CD4-positive, alpha-beta memory T cell (primary cell): ENCODE measurements at regions of chr14 and their contacts with region 1.

Region 1: DNA sequence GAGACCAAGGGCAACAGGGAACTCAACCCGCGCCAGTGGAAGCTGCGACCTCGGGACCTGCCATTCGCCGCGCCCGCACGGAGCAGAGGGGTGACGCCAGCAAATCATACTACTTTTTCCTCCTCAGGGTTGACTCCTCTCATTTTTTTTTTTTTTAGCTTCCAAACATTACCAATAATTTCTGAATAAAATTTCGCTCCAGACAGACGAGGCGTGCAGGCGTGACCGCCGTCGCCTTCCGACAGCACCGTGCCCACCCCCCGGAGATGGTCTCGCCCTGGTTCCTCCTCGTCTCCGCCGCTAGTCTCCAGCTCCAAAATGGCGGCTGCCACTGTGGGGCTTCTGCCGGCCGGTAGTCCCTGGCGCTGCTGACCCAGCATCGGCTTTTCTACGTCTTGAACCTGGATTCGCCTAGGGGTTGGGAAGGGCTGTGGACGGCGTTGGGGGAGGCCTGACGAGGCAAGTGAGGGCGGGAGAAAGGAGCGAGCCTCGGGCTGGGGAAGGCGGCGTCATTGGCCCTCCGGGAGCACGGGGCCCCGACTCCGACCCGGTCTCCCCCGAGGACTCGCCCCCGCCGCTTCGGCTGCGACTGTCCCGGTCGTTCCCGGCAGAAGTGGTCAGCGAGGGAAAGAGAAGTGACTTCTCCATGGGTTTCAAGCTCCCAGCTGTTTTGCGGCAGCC is at the starts of genes CPSF2 and NDUFB1:
- DNase-seq: peak; percentile 85 to 88 (median 85)
- H3K4me3 ChIP-seq: peak within 1 kb of the TSS; percentile 98
- H3K4me3 Mint-ChIP-seq: peak within 1 kb of the TSS; percentile 96 to 100 (median 99)
- H3K27ac ChIP-seq: peak within 1 kb of the TSS; percentile 88
- H3K27ac Mint-ChIP-seq: peak within 1 kb of the TSS; percentile 98 to 100 (median 99)
- H3K4me1 ChIP-seq: peaks cover 69% of the 10 kb centered on the region
- H3K4me1 Mint-ChIP-seq: peaks cover 27 to 59% (median 37%) of the 10 kb centered on the region in 4 donors
- H3K27me3 ChIP-seq: no peaks in the 10 kb centered on the region
- H3K27me3 Mint-ChIP-seq: peaks cover 0 to 2% of the 10 kb centered on the region in 2 donors
- total RNA-seq, gene CPSF2: 71.2 to 71.9 TPM
- total RNA-seq, gene NDUFB1: 94.6 to 96.0 TPM

Region 2: GRCh38 chr14:92039719-92040430 is 81.9 kb before region 1 on chr14 and contains the start of gene TRIP11:
- CTCF ChIA-PET with region 1: interaction called, 7 read pairs
- POLR2A ChIA-PET with region 1: interaction called, 54 read pairs
- intact Hi-C with region 1: no loop called
- DNase-seq: peak; percentile 94 to 97 (median 95)
- H3K4me3 ChIP-seq: peak within 1 kb of the TSS; percentile 51 to 71
- H3K4me3 Mint-ChIP-seq: peak within 1 kb of the TSS; percentile 93 to 100 (median 96)
- H3K27ac ChIP-seq: peak within 1 kb of the TSS; percentile 89
- H3K27ac Mint-ChIP-seq: peak within 1 kb of the TSS; percentile 97 to 99 (median 99)
- H3K4me1 ChIP-seq: peaks cover 43% of the 10 kb centered on the region
- H3K4me1 Mint-ChIP-seq: peaks cover 31 to 59% (median 43%) of the 10 kb centered on the region in 4 donors
- H3K27me3 ChIP-seq: no peaks in the 10 kb centered on the region
- H3K27me3 Mint-ChIP-seq: no peaks in the 10 kb centered on the region
- total RNA-seq, gene TRIP11: 68.0 to 68.7 TPM

Region 3: DNA sequence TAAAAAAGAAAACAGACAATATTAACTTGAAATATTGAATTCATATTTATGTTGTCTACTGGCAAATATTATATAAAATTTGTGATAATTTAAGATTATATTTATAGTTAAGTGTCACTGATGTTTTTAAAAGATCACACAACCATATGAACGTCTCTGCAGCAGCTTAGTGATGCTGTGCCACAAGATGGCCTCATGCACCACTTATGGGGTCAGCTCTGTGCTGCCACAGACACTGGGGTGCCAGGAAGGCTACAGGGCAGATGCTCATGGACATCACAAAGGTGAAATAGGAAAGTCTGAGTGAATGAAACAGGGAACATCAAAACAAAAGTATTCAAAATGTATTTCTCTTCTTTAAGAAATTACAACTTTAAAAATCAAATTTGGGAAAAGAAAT is 28.5 kb before region 1 on chr14:
- CTCF ChIA-PET with region 1: no interaction called
- POLR2A ChIA-PET with region 1: no interaction called
- intact Hi-C with region 1: no loop called
- DNase-seq: no peak
- H3K4me3 ChIP-seq: no peak overlapping the region
- H3K4me3 Mint-ChIP-seq: no peak overlapping the region
- H3K27ac ChIP-seq: no peak overlapping the region
- H3K27ac Mint-ChIP-seq: peak overlapping the region in 1 of 7 donors; percentile 69
- H3K4me1 ChIP-seq: no peaks in the 10 kb centered on the region
- H3K4me1 Mint-ChIP-seq: peaks cover 0 to 2% (median 0%) of the 10 kb centered on the region in 4 donors
- H3K27me3 ChIP-seq: no peaks in the 10 kb centered on the region
- H3K27me3 Mint-ChIP-seq: no peaks in the 10 kb centered on the region

Region 4: DNA sequence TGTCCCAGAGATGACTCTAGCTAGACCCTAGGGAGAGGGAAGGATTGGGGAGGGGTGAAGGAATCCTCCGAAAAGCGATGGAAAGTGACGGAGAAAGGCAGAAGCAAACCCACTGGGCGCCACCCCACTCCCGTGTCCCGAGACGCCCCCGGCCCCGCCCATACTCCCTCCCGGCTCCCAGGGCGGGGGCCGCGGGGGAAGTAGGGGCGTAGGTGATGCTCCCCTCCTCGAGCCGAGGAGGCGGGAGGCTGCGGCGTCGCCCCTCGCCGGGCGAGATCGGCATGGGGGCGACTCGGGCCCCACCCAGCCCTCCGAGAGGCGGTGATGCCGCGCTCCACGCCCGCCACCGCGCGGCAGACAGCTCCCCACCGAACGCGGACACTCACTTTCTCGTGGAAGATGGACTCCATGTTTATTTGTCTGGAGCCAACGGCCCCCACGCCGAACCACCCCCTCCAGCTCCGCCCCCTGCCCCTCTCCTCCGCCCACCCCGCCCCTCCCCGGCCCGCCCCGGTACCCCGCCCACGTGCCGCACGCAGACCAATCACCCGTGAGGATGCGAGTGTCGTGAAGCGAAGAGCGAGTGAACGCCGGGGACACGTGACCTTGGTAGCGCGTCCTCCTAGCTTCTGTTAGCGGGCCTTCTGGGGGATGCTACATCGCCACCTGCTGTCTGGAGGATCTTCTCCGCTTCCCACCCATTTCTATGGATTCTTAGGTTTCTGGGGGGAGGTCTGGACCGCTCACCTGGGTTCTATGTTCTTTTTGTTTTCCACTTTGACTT is 15.5 kb before region 1 on chr14 and contains the start of gene ATXN3:
- CTCF ChIA-PET with region 1: interaction called, 167 read pairs
- POLR2A ChIA-PET with region 1: interaction called, 125 read pairs
- intact Hi-C with region 1: loop called (anchors 1 kb)
- DNase-seq: peak; percentile 92 to 98 (median 95)
- H3K4me3 ChIP-seq: peak within 1 kb of the TSS; percentile 80 to 98
- H3K4me3 Mint-ChIP-seq: peak within 1 kb of the TSS; percentile 94 to 100 (median 99)
- H3K27ac ChIP-seq: peak within 1 kb of the TSS; percentile 73
- H3K27ac Mint-ChIP-seq: peak within 1 kb of the TSS; percentile 86 to 97 (median 97)
- H3K4me1 ChIP-seq: peaks cover 55% of the 10 kb centered on the region
- H3K4me1 Mint-ChIP-seq: peaks cover 27 to 55% (median 42%) of the 10 kb centered on the region in 4 donors
- H3K27me3 ChIP-seq: no peaks in the 10 kb centered on the region
- H3K27me3 Mint-ChIP-seq: no peaks in the 10 kb centered on the region
- total RNA-seq, gene ATXN3: 48.9 to 52.4 TPM

Region 5: DNA sequence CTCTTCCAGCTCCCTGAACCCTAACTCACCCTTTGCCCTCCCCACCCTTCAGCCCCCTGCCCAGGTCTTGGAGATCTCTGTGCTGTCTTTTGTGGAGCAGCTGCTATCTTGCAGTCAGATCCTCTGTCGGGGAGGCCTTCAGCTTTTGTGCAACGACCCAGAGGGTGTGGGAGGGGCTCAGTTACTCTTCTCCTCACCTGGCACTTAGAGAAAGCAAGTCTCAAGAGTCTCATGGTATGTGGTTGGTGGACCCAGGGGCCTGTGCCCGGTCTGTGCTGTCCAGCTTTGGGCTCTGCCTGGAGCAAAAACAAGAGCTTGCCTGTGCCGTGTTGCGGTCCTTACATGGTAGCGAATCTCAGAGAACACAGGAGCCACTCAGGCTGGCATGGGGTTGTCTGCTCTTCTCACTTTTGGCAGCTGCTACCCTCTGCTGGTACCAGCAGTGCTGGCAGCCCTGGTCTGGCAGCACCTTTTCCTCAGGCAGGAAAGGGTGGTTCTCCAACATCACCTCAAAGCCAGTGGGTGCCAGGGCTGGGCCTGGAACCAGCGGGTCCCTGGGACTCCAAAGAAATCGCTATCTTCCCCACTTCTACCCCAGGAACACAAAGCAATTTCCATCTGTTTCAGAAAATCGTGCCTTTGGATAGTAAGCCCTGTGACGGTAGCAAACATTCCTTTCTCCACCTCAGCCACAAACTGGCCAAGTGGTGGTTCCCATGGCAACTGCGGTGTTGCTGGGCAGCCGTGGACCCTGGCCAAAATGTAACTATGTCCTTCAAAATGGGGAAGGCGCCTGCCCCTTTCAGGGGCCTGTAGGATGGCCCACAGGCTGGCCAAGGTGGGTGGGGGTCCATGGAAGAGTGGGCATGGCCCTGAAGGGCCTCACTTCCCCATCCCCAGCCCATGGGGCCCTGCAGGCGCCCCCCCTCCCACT is 481.8 kb after region 1 on chr14:
- CTCF ChIA-PET with region 1: no interaction called
- POLR2A ChIA-PET with region 1: no interaction called
- intact Hi-C with region 1: loop called (anchors 10 kb)
- DNase-seq: peak in 4 of 5 donors; percentile 58 to 67 (median 61)
- H3K4me3 ChIP-seq: no peak overlapping the region
- H3K4me3 Mint-ChIP-seq: peak overlapping the region in 2 of 8 donors; percentile 34 to 50
- H3K27ac ChIP-seq: no peak overlapping the region
- H3K27ac Mint-ChIP-seq: peak overlapping the region in 5 of 7 donors; percentile 24 to 52 (median 43)
- H3K4me1 ChIP-seq: peaks cover 12% of the 10 kb centered on the region
- H3K4me1 Mint-ChIP-seq: peaks cover 11 to 16% (median 14%) of the 10 kb centered on the region in 4 donors
- H3K27me3 ChIP-seq: no peaks in the 10 kb centered on the region
- H3K27me3 Mint-ChIP-seq: peaks cover 0 to 2% of the 10 kb centered on the region in 2 donors

Region 6: GRCh38 chr14:92793709-92794546 is 672.1 kb after region 1 on chr14 and contains the start of gene GOLGA5:
- CTCF ChIA-PET with region 1: no interaction called
- POLR2A ChIA-PET with region 1: interaction called, 3 read pairs
- intact Hi-C with region 1: loop called (anchors 5 kb)
- DNase-seq: peak; percentile 97 to 100 (median 99)
- H3K4me3 ChIP-seq: peak within 1 kb of the TSS; percentile 67 to 94
- H3K4me3 Mint-ChIP-seq: peak within 1 kb of the TSS; percentile 84 to 98 (median 96)
- H3K27ac ChIP-seq: peak within 1 kb of the TSS; percentile 85
- H3K27ac Mint-ChIP-seq: peak within 1 kb of the TSS; percentile 77 to 98 (median 95)
- H3K4me1 ChIP-seq: peaks cover 30% of the 10 kb centered on the region
- H3K4me1 Mint-ChIP-seq: peaks cover 26 to 46% (median 35%) of the 10 kb centered on the region in 4 donors
- H3K27me3 ChIP-seq: no peaks in the 10 kb centered on the region
- H3K27me3 Mint-ChIP-seq: no peaks in the 10 kb centered on the region
- total RNA-seq, gene GOLGA5: 27.4 to 29.8 TPM